ENCODE measurements at regions of chr10 and their contacts with region 1.

Region 1: GRCh38 chr10:73246783-73247508 is at the start of gene DNAJC9:
- DNase-seq: peak; percentile 99
- ATAC-seq: peak; percentile 94
- H3K4me3 Mint-ChIP-seq: peak within 1 kb of the TSS; percentile 99
- H3K27ac Mint-ChIP-seq: peak within 1 kb of the TSS; percentile 97
- H3K4me1 Mint-ChIP-seq: peaks cover 58% of the 10 kb centered on the region
- H3K27me3 Mint-ChIP-seq: no peaks in the 10 kb centered on the region
- total RNA-seq, gene DNAJC9: 36.9 to 45.4 TPM

Region 2: GRCh38 chr10:73131301-73131700 is 115.6 kb before region 1 on chr10:
- CTCF ChIA-PET with region 1: no interaction called
- POLR2A ChIA-PET with region 1: no interaction called
- intact Hi-C with region 1: no loop called
- DNase-seq: no peak
- ATAC-seq: no peak
- H3K4me3 Mint-ChIP-seq: no peak overlapping the region
- H3K27ac Mint-ChIP-seq: no peak overlapping the region
- H3K4me1 Mint-ChIP-seq: no peaks in the 10 kb centered on the region
- H3K27me3 Mint-ChIP-seq: no peaks in the 10 kb centered on the region

Region 3: DNA sequence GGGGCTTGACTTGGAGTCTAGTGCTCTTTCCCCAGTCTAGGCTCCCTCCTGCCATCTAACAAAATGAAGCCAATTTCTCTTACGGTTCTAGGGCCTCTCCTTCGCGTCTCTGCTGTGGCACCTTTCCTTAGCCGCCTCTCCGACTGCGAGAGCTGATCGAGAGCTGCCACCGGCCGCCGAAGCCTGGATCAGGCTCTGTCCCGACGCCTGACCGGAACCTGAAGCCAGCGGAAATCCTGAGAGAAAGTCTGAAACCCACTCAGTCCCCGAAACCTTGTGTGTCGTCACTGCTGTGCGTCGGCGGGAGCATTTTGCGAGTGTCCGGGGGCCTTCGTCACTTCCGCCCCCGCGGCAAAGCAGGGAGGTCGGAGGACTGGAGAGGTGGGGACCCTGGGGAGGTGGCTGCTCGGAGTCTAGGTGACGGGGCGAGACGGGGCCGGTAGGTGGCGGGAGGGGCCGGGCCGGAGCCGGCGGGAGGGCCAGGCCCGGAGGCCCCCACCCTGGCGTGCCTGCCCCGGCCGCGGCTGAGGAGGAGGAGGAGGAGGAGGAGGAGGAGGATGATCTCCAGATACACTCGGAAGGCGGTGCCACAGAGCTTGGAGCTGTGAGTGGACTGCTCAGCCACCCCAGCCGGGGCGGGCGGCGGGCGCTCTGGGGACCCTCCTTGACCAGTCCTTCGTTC is 79.0 kb before region 1 on chr10 and contains the starts of genes ECD and FAM149B1:
- CTCF ChIA-PET with region 1: no interaction called
- POLR2A ChIA-PET with region 1: interaction called, 9 read pairs
- intact Hi-C with region 1: loop called (anchors 1 kb)
- DNase-seq: peak; percentile 96
- ATAC-seq: peak; percentile 94
- H3K4me3 Mint-ChIP-seq: peak within 1 kb of the TSS; percentile 100
- H3K27ac Mint-ChIP-seq: peak within 1 kb of the TSS; percentile 100
- H3K4me1 Mint-ChIP-seq: peaks cover 37% of the 10 kb centered on the region
- H3K27me3 Mint-ChIP-seq: no peaks in the 10 kb centered on the region
- total RNA-seq, gene ECD: 41.0 to 50.7 TPM
- total RNA-seq, gene FAM149B1: 16.0 to 18.6 TPM

Region 4: GRCh38 chr10:73358331-73359279 is 111.7 kb after region 1 on chr10 and contains the start of gene CFAP70:
- CTCF ChIA-PET with region 1: interaction called, 3 read pairs
- POLR2A ChIA-PET with region 1: no interaction called
- intact Hi-C with region 1: loop called (anchors 1 to 2 kb)
- DNase-seq: peak; percentile 96
- ATAC-seq: peak; percentile 100
- H3K4me3 Mint-ChIP-seq: peak within 1 kb of the TSS; percentile 97
- H3K27ac Mint-ChIP-seq: peak within 1 kb of the TSS; percentile 84
- H3K4me1 Mint-ChIP-seq: peaks cover 14% of the 10 kb centered on the region
- H3K27me3 Mint-ChIP-seq: no peaks in the 10 kb centered on the region
- total RNA-seq, gene CFAP70: 0.58 to 0.71 TPM

Region 5: DNA sequence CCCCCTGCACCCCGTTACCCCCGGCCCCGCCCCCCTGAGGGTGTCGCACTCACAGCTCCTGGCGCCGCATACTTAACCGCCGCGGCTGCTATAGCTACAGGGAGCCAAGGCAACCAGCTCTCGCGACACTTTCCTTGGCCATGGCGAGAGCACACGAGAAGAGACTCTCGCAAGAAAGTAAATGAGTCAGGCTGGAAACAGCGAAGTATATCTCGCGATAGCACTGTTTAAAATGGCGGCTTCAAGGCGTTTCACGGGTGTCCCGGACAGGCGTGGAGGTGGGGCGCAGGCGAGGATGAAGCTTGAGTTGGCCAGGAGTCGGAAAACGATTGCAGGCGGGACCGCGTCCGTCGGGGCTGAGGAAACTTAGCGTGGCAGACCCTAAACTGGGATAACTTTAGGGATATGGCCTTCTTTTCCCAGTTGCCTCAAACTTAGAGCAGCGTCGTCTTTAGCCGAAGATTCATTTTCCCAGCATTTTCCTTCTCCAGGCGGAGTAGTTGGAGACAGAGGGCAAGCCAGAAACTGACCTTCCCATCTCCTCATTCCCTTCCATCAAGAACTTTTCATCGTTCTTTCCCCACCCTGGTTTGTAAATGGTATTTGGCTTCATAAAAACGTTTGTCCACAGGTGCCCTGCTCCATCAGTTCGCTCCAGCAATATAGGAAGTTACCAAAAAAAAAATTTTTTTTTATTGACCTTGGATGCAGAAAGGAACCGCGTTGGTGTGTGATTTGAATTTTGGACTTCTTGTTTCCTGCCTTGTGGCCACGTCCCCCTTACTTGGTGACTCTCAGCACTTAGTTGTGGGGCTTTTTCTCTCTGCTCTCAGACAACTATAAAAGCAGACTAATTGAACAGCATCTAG is 379.2 kb after region 1 on chr10:
- CTCF ChIA-PET with region 1: no interaction called
- POLR2A ChIA-PET with region 1: interaction called, 5 read pairs
- intact Hi-C with region 1: loop called (anchors 1 kb)
- DNase-seq: peak; percentile 97
- ATAC-seq: peak; percentile 99
- H3K4me3 Mint-ChIP-seq: peak overlapping the region; percentile 96
- H3K27ac Mint-ChIP-seq: peak overlapping the region; percentile 98
- H3K4me1 Mint-ChIP-seq: peaks cover 19% of the 10 kb centered on the region
- H3K27me3 Mint-ChIP-seq: no peaks in the 10 kb centered on the region

Region 6: GRCh38 chr10:73650537-73651331 is 403.8 kb after region 1 on chr10:
- CTCF ChIA-PET with region 1: no interaction called
- POLR2A ChIA-PET with region 1: no interaction called
- intact Hi-C with region 1: no loop called
- DNase-seq: no peak
- ATAC-seq: peak; percentile 54
- H3K4me3 Mint-ChIP-seq: no peak overlapping the region
- H3K27ac Mint-ChIP-seq: no peak overlapping the region
- H3K4me1 Mint-ChIP-seq: peaks cover 2% of the 10 kb centered on the region
- H3K27me3 Mint-ChIP-seq: no peaks in the 10 kb centered on the region

Region 7: GRCh38 chr10:73785221-73785720 is 538.3 kb after region 1 on chr10 and contains the start of gene ZSWIM8:
- CTCF ChIA-PET with region 1: no interaction called
- POLR2A ChIA-PET with region 1: no interaction called
- intact Hi-C with region 1: loop called in 1 of 2 experiments (anchors 1 kb)
- DNase-seq: peak; percentile 90
- ATAC-seq: peak; percentile 85
- H3K4me3 Mint-ChIP-seq: peak within 1 kb of the TSS; percentile 83
- H3K27ac Mint-ChIP-seq: peak within 1 kb of the TSS; percentile 98
- H3K4me1 Mint-ChIP-seq: peaks cover 46% of the 10 kb centered on the region
- H3K27me3 Mint-ChIP-seq: no peaks in the 10 kb centered on the region
- total RNA-seq, gene ZSWIM8: 40.1 to 67.3 TPM